ENCODE measurements at regions of chr1 and their contacts with region 1.

Region 1: DNA sequence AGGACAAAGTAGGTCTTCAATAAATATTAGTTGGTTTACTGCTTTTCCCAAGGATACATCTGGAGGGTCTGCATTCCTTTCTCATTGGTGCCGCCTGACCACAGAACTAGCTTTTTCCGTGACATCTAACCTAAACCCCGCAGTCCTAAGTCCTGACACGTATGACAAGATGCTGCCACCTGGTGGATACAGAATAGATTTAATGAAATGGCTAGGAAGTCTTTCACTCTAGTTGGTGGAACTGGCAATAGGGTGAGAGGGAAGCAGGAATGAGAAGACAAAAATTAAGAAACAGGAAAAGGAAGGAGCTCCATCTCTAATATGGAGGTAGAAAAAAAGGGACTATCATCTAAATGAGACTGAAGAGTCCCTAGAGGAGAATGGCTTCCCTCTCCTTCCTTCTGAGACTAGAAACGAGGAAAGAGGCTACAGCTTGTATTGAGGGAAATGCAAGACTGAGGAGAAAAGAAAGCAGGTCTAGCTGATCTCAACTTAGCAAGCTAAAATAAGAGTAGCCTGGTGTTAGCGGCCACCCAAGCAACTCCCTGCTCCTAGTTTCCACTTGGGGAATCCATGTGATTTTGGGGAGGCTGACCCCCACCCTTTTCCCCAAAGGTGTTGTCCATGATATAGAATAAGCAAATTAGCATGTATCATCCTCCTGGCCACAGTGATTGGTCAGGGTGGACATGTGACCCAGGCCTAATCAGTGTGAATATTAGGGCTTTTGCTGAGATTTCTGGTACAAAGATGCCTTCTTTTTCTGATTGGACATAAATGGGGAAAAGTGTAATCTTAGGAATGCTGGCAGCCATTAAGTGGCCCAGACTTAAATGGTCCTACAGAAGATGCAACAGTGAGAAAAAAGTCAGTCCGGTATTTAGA is 5.9 kb downstream of the RFX5 start:
- DNase-seq: no peak
- ATAC-seq: peak; percentile 78
- H3K4me3 Mint-ChIP-seq: no peak overlapping the region
- H3K27ac Mint-ChIP-seq: peak overlapping the region; percentile 9
- H3K4me1 Mint-ChIP-seq: peaks cover 18% of the 10 kb centered on the region
- H3K27me3 Mint-ChIP-seq: no peaks in the 10 kb centered on the region

Region 2: GRCh38 chr1:151327223-151327902 is 13.7 kb before region 1 on chr1 and contains the start of gene PI4KB:
- POLR2A ChIA-PET with region 1: interaction called, 12 read pairs
- DNase-seq: peak; percentile 87
- ATAC-seq: peak; percentile 91
- H3K4me3 Mint-ChIP-seq: peak within 1 kb of the TSS; percentile 99
- H3K27ac Mint-ChIP-seq: peak within 1 kb of the TSS; percentile 97
- H3K4me1 Mint-ChIP-seq: peaks cover 28% of the 10 kb centered on the region
- H3K27me3 Mint-ChIP-seq: no peaks in the 10 kb centered on the region
- total RNA-seq, gene PI4KB: 73.8 to 75.7 TPM

Region 3: DNA sequence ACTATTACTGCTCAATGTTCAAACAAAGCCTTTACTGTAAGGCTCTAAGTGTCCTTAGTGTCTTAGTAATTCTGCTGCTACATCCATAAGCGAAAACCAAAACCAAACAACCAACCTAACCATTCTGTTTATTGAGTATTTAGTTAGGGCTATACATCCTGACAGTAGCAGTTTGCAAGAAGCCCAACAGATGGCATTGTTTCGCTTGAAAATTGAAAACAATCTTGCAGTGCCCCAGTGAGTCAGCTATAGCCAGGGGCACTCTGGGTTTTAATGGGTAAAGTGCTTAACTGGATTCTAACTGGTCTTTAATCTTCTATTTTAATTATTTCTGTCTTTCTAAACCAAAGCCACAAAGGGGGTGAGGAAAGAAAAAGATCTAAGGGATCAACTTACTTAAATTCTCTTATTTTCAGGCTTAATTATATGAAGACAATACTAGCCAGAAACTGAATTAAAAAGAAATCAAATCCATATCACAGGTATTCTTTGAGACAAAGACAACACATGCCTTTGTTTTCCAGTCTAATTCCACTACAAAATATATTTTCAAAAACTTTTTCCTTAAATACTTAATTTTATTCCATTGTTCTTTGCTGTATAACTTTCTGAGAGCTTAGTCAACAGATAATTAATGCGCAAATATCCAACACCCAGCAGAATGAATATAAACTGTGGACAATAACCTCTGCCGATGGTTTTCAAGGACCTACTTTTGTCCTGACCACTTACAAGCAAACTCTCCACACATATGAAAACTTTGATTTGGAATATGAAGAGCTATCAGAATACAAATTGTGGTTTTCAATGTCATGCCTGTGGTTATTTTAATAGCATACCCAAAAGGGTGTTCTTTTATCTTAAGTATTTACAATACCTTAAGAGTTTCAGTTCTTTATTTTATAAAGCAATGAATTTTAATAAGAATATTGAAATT is 103.0 kb after region 1 on chr1:
- POLR2A ChIA-PET with region 1: no interaction called
- DNase-seq: no peak
- ATAC-seq: peak; percentile 91
- H3K4me3 Mint-ChIP-seq: no peak overlapping the region
- H3K27ac Mint-ChIP-seq: no peak overlapping the region
- H3K4me1 Mint-ChIP-seq: peaks cover 22% of the 10 kb centered on the region
- H3K27me3 Mint-ChIP-seq: no peaks in the 10 kb centered on the region

Measured in activated naive CD8-positive, alpha-beta T cell treated with anti-CD3 and anti-CD28 coated beads, Interleukin-2, amount 10 ng/mL, durations not matched to agents 7 days and 5 days (primary cell).